Natural killer cell (primary cell): ENCODE measurements at regions of chr2 and their contacts with region 1.

Region 1: DNA sequence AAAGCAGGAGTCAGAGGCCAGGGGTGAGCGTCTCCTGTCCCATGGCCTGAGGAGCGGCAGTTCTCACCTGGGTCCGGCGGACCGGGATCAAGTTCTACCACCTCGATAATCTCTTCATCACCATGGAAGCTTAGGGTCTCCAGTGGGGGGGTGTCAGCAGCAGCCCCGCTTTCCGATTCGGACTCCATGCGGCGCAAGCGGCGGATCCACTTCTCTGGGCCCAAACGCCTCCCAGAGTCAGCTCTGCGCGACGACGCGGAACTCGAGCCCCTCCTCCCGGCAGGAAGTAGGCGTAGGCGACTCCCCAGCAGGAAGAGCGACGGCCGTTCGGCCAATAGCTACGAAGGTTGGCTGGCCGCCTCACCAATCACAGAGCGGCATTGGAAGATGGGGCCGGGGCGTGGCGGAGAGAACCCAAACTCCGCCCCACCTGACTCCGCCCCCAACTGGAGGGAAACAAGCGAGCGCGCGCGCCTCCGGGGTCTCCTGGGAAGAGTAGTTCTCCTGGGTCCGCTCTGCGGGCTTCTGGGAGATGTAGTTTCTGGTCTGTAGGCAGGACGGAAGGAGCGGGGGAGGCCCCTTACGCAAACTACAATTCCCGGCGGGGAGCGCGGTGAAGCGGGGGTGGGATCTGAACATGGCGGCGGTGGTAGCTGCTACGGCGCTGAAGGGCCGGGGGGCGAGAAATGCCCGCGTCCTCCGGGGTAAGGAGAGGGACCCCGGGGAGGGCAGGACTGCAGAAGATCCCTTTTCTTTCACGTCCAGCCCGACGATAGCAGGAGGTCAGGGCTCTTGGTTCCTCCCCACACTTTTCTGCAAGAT is at the starts of genes AAMP and PNKD:
- DNase-seq: peak; percentile 100
- ATAC-seq: peak; percentile 89 to 98 (median 89)
- H3K4me3 ChIP-seq: peak within 1 kb of the TSS; percentile 82
- H3K4me3 Mint-ChIP-seq: peak within 1 kb of the TSS; percentile 96
- H3K27ac ChIP-seq: peak within 1 kb of the TSS; percentile 73
- H3K27ac Mint-ChIP-seq: peak within 1 kb of the TSS; percentile 84 to 88
- H3K4me1 ChIP-seq: peaks cover 34% of the 10 kb centered on the region
- H3K4me1 Mint-ChIP-seq: peaks cover 31 to 56% of the 10 kb centered on the region in 2 donors
- H3K27me3 ChIP-seq: no peaks in the 10 kb centered on the region
- H3K27me3 Mint-ChIP-seq: no peaks in the 10 kb centered on the region
- CTCF ChIP-seq: no peak
- total RNA-seq, gene AAMP: 52.5 to 61.6 (median 60.0) TPM
- total RNA-seq, gene PNKD: 18.8 to 21.3 (median 18.9) TPM

Region 2: GRCh38 chr2:218216674-218217359 is 53.3 kb before region 1 on chr2 and contains the start of gene ARPC2:
- intact Hi-C with region 1: loop called (anchors 1 kb)
- DNase-seq: peak; percentile 97 to 98
- ATAC-seq: peak; percentile 81 to 92 (median 87)
- H3K4me3 ChIP-seq: peak within 1 kb of the TSS; percentile 100
- H3K4me3 Mint-ChIP-seq: peak within 1 kb of the TSS; percentile 96
- H3K27ac ChIP-seq: peak within 1 kb of the TSS; percentile 100
- H3K27ac Mint-ChIP-seq: peak within 1 kb of the TSS; percentile 98 to 99
- H3K4me1 ChIP-seq: peaks cover 31% of the 10 kb centered on the region
- H3K4me1 Mint-ChIP-seq: peaks cover 46 to 48% of the 10 kb centered on the region in 2 donors
- H3K27me3 ChIP-seq: no peaks in the 10 kb centered on the region
- H3K27me3 Mint-ChIP-seq: no peaks in the 10 kb centered on the region
- CTCF ChIP-seq: no peak
- total RNA-seq, gene ARPC2: 824 to 880 (median 830) TPM

Region 3: DNA sequence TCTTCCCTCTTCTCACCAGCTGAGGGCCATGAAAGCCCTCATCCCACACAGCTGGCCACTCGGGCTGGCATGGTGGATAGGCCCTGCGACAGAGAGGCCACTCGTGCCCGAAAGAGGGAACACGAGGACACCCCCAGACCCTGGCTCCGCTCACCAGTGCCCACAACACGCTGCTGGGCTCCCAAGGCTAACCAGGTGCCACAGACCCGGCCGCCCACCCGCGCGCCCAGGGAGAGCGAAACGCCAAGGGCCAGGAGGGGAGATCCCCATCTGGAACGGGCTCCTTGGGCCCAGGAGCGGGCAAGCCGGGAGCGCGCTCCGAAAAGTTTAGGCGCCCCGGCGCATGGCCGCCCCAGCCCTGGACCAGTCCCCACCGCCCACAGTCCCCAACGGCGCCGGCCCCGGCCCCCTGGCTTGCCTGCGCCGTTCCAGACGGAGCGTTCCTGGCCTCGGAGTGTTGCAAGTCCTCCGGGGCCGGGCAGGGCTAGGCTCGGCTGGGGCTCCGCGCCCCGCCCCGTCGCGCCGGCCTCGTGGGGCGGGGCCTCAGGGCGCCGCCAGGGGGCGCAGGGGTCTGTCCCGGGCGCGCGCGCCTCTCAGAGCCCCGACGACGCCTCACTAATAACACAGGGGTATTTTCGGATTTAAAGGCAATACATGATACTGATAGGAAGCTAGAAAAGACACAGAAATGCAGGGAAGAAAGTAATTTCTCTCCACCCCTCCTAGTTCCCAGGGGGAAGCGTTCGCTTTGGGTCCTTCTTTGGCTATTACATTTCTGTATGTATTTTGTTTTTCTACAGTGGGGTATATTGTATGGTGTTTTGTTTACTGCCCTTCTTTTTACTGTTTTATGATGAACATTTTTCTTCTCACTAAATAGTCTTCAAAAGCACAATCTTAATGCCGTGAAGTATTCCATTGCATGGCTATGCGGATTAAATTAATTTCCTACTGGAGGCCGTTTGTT is 22.2 kb after region 1 on chr2 and contains the start of gene TMBIM1:
- intact Hi-C with region 1: loop called (anchors 1 kb)
- DNase-seq: peak; percentile 86 to 91
- ATAC-seq: peak; percentile 90 to 97 (median 95)
- H3K4me3 ChIP-seq: peak within 1 kb of the TSS; percentile 55
- H3K4me3 Mint-ChIP-seq: peak within 1 kb of the TSS; percentile 92
- H3K27ac ChIP-seq: peak within 1 kb of the TSS; percentile 86
- H3K27ac Mint-ChIP-seq: peak within 1 kb of the TSS; percentile 100
- H3K4me1 ChIP-seq: peaks cover 55% of the 10 kb centered on the region
- H3K4me1 Mint-ChIP-seq: peaks cover 44 to 61% of the 10 kb centered on the region in 2 donors
- H3K27me3 ChIP-seq: no peaks in the 10 kb centered on the region
- H3K27me3 Mint-ChIP-seq: no peaks in the 10 kb centered on the region
- CTCF ChIP-seq: peak; percentile 95
- total RNA-seq, gene TMBIM1: 84.9 to 107 (median 95.1) TPM

Region 4: DNA sequence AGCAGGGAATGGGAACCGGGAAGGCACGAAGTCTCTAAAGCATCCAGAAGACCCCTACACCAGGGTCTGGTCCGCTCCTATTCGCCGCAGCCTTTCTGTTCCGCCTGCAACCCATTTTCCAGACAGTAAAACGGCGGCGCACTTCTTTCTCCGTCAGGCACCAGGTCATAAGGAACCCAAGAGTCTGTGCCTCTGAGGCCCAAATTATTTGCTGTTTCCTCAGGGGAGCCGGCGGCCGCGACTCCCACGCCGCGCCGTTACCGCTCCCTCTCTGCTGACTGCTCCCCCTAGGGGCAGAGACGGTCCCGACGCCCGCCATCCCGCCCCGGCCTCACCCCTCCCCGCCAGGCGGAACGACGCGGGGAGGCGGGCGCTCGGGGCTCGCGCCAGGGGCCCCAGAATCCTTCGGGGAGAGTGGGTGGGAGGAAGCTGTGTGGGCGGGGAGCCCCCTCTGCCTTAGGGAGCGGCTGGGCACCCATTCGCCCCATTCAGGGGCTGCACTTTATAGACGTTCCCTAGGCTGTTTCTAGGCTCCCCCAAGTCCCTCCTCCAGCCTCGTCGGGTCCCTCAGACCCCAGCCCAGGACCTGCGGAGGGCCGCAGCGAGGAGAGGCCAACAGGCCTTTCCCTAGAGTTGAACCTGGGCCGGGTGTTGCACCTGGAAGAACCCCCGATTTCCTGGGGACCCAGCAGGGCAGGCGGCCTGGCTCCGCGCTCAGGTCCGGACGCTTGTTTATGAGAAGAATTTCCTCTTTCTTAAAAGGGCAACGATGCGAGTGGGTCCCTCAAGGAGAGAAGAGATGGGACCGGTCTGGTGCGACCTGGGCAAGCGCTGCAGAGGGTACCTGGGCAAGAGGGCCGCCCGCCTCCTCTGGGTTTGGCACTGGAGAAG is 125.9 kb after region 1 on chr2:
- intact Hi-C with region 1: loop called (anchors 1 kb)
- DNase-seq: peak; percentile 90 to 97
- ATAC-seq: peak; percentile 62 to 82 (median 71)
- H3K4me3 ChIP-seq: peak overlapping the region; percentile 59
- H3K4me3 Mint-ChIP-seq: peak overlapping the region; percentile 94
- H3K27ac ChIP-seq: peak overlapping the region; percentile 83
- H3K27ac Mint-ChIP-seq: peak overlapping the region; percentile 98
- H3K4me1 ChIP-seq: peaks cover 62% of the 10 kb centered on the region
- H3K4me1 Mint-ChIP-seq: peaks cover 39 to 58% of the 10 kb centered on the region in 2 donors
- H3K27me3 ChIP-seq: no peaks in the 10 kb centered on the region
- H3K27me3 Mint-ChIP-seq: no peaks in the 10 kb centered on the region
- CTCF ChIP-seq: peak; percentile 80

Region 5: GRCh38 chr2:218568190-218569037 is 298.3 kb after region 1 on chr2 and contains the starts of genes CNOT9 and USP37:
- intact Hi-C with region 1: loop called (anchors 1 kb)
- DNase-seq: peak; percentile 99 to 100
- ATAC-seq: peak; percentile 86 to 97 (median 89)
- H3K4me3 ChIP-seq: peak within 1 kb of the TSS; percentile 67
- H3K4me3 Mint-ChIP-seq: peak within 1 kb of the TSS; percentile 99
- H3K27ac ChIP-seq: peak within 1 kb of the TSS; percentile 98
- H3K27ac Mint-ChIP-seq: peak within 1 kb of the TSS; percentile 92 to 95
- H3K4me1 ChIP-seq: peaks cover 27% of the 10 kb centered on the region
- H3K4me1 Mint-ChIP-seq: peaks cover 42 to 67% of the 10 kb centered on the region in 2 donors
- H3K27me3 ChIP-seq: no peaks in the 10 kb centered on the region
- H3K27me3 Mint-ChIP-seq: no peaks in the 10 kb centered on the region
- CTCF ChIP-seq: no peak
- total RNA-seq, gene CNOT9: 61.4 to 66.7 (median 66.3) TPM
- total RNA-seq, gene USP37: 18.3 to 26.2 (median 21.6) TPM

Region 6: GRCh38 chr2:218852911-218853667 is 583.0 kb after region 1 on chr2:
- intact Hi-C with region 1: loop called (anchors 10 kb)
- DNase-seq: peak; percentile 44 to 85
- ATAC-seq: peak; percentile 65 to 78 (median 73)
- H3K4me3 ChIP-seq: no peak overlapping the region
- H3K4me3 Mint-ChIP-seq: no peak overlapping the region
- H3K27ac ChIP-seq: no peak overlapping the region
- H3K27ac Mint-ChIP-seq: no peak overlapping the region
- H3K4me1 ChIP-seq: no peaks in the 10 kb centered on the region
- H3K4me1 Mint-ChIP-seq: peaks cover 0 to 13% of the 10 kb centered on the region in 2 donors
- H3K27me3 ChIP-seq: peaks cover 26% of the 10 kb centered on the region
- H3K27me3 Mint-ChIP-seq: peaks cover 45 to 51% of the 10 kb centered on the region in 2 donors
- CTCF ChIP-seq: peak; percentile 65

Region 7: GRCh38 chr2:219597552-219598307 is 1327.6 kb after region 1 on chr2 and contains the start of gene STK11IP:
- intact Hi-C with region 1: no loop called
- DNase-seq: peak; percentile 87 to 94
- ATAC-seq: peak; percentile 88 to 93 (median 90)
- H3K4me3 ChIP-seq: peak within 1 kb of the TSS; percentile 95
- H3K4me3 Mint-ChIP-seq: peak within 1 kb of the TSS; percentile 96
- H3K27ac ChIP-seq: peak within 1 kb of the TSS; percentile 80
- H3K27ac Mint-ChIP-seq: peak within 1 kb of the TSS; percentile 93 to 95
- H3K4me1 ChIP-seq: peaks cover 11% of the 10 kb centered on the region
- H3K4me1 Mint-ChIP-seq: peaks cover 26 to 29% of the 10 kb centered on the region in 2 donors
- H3K27me3 ChIP-seq: no peaks in the 10 kb centered on the region
- H3K27me3 Mint-ChIP-seq: peaks cover 5 to 14% of the 10 kb centered on the region in 2 donors
- CTCF ChIP-seq: no peak
- total RNA-seq, gene STK11IP: 56.1 to 76.0 (median 65.2) TPM